ENCODE measurements at regions of chr19 and their contacts with region 1.

Region 1: GRCh38 chr19:506404-507285 is 652 bp upstream of the TPGS1 start:
- DNase-seq: peak; percentile 98 to 99 (median 99)
- H3K4me3 ChIP-seq: peak overlapping the region; percentile 61 to 97
- H3K4me3 Mint-ChIP-seq: peak overlapping the region; percentile 91 to 100 (median 99)
- H3K27ac ChIP-seq: peak overlapping the region; percentile 89
- H3K27ac Mint-ChIP-seq: peak overlapping the region; percentile 94 to 100 (median 100)
- H3K4me1 ChIP-seq: peaks cover 45% of the 10 kb centered on the region
- H3K4me1 Mint-ChIP-seq: peaks cover 13 to 55% (median 36%) of the 10 kb centered on the region in 4 donors
- H3K27me3 ChIP-seq: no peaks in the 10 kb centered on the region
- H3K27me3 Mint-ChIP-seq: no peaks in the 10 kb centered on the region

Region 2: GRCh38 chr19:344625-345319 is 161.9 kb before region 1 on chr19 and contains the start of gene MIER2:
- CTCF ChIA-PET with region 1: no interaction called
- POLR2A ChIA-PET with region 1: interaction called, 3 read pairs
- intact Hi-C with region 1: loop called (anchors 1 kb)
- DNase-seq: peak; percentile 81 to 96 (median 89)
- H3K4me3 ChIP-seq: peak within 1 kb of the TSS; percentile 38 to 71
- H3K4me3 Mint-ChIP-seq: peak within 1 kb of the TSS; percentile 82 to 91 (median 87)
- H3K27ac ChIP-seq: peak within 1 kb of the TSS; percentile 44
- H3K27ac Mint-ChIP-seq: peak within 1 kb of the TSS; percentile 77 to 93 (median 86)
- H3K4me1 ChIP-seq: peaks cover 43% of the 10 kb centered on the region
- H3K4me1 Mint-ChIP-seq: peaks cover 27 to 52% (median 42%) of the 10 kb centered on the region in 4 donors
- H3K27me3 ChIP-seq: no peaks in the 10 kb centered on the region
- H3K27me3 Mint-ChIP-seq: no peaks in the 10 kb centered on the region
- total RNA-seq, gene MIER2: 17.5 to 18.2 TPM

Region 3: DNA sequence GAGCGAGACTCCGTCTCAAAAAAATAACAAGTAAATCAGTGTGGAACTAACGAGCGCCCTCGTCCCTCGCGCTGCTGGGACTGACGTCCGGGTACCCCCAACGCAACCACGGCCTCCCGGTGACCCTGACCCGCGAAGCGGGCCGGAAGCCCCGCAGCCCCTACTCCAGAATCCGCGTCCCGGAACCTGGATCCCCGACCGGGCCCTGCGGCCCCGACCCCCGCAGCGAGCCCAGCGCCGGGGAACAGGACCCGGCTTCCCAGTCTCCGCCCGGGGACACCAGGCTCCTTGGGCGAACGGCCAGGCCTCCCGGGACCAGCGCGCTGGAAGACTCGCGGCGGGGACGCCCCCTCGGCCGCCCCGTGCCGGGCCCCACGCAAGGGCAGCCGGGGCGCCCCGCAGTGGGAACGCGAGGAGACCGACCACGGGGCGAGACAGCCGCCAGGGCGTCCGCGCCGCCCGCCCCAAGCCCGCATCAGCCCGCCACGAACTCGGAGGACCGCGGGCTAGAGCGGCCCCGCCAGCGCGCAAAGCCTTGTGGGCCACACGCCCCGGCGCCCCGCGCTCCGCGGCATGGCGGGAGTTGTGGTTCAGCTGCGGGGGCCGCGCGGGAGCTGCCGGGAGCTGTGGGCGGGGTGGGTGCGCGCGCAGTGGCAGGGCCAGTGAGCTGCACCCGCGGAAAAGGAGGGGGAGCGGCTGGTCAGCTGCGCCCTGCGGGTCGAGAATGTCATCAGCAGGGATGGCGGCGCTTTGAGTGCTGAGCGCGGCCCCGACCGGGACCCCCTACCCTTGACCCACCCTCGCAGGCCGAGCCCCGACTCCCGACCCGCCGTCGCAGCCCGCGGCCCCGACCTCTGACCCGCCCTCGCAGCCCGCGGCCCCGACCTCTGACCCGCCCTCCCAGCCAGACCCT is 17.9 kb before region 1 on chr19:
- CTCF ChIA-PET with region 1: interaction called, 30 read pairs
- POLR2A ChIA-PET with region 1: interaction called, 61 read pairs
- intact Hi-C with region 1: loop called (anchors 1 kb)
- DNase-seq: peak; percentile 89 to 92 (median 91)
- H3K4me3 ChIP-seq: peak overlapping the region in 1 of 2 donors; percentile 77
- H3K4me3 Mint-ChIP-seq: peak overlapping the region; percentile 68 to 91 (median 82)
- H3K27ac ChIP-seq: peak overlapping the region; percentile 79
- H3K27ac Mint-ChIP-seq: peak overlapping the region; percentile 24 to 91 (median 80)
- H3K4me1 ChIP-seq: peaks cover 5% of the 10 kb centered on the region
- H3K4me1 Mint-ChIP-seq: peaks cover 0 to 24% (median 2%) of the 10 kb centered on the region in 4 donors
- H3K27me3 ChIP-seq: no peaks in the 10 kb centered on the region
- H3K27me3 Mint-ChIP-seq: peaks cover 4 to 6% of the 10 kb centered on the region in 2 donors

Region 4: GRCh38 chr19:531009-531752 is 24.5 kb after region 1 on chr19:
- CTCF ChIA-PET with region 1: interaction called, 48 read pairs
- POLR2A ChIA-PET with region 1: interaction called, 111 read pairs
- intact Hi-C with region 1: loop called (anchors 1 kb)
- DNase-seq: peak; percentile 79 to 98 (median 92)
- H3K4me3 ChIP-seq: peak overlapping the region in 1 of 2 donors; percentile 61
- H3K4me3 Mint-ChIP-seq: peak overlapping the region; percentile 79 to 87 (median 84)
- H3K27ac ChIP-seq: peak overlapping the region; percentile 81
- H3K27ac Mint-ChIP-seq: peak overlapping the region; percentile 58 to 93 (median 88)
- H3K4me1 ChIP-seq: peaks cover 27% of the 10 kb centered on the region
- H3K4me1 Mint-ChIP-seq: peaks cover 6 to 24% (median 10%) of the 10 kb centered on the region in 4 donors
- H3K27me3 ChIP-seq: no peaks in the 10 kb centered on the region
- H3K27me3 Mint-ChIP-seq: peaks cover 0 to 3% of the 10 kb centered on the region in 2 donors

Region 5: GRCh38 chr19:572140-572742 is 65.6 kb after region 1 on chr19 and contains the start of gene BSG:
- CTCF ChIA-PET with region 1: interaction called, 7 read pairs
- POLR2A ChIA-PET with region 1: interaction called, 25 read pairs
- intact Hi-C with region 1: no loop called
- DNase-seq: peak; percentile 98 to 99 (median 99)
- H3K4me3 ChIP-seq: peak within 1 kb of the TSS; percentile 75 to 81
- H3K4me3 Mint-ChIP-seq: peak within 1 kb of the TSS; percentile 95 to 99 (median 98)
- H3K27ac ChIP-seq: peak within 1 kb of the TSS; percentile 70
- H3K27ac Mint-ChIP-seq: peak within 1 kb of the TSS; percentile 96 to 100 (median 98)
- H3K4me1 ChIP-seq: peaks cover 46% of the 10 kb centered on the region
- H3K4me1 Mint-ChIP-seq: peaks cover 18 to 49% (median 35%) of the 10 kb centered on the region in 4 donors
- H3K27me3 ChIP-seq: no peaks in the 10 kb centered on the region
- H3K27me3 Mint-ChIP-seq: no peaks in the 10 kb centered on the region
- total RNA-seq, gene BSG: 150 to 151 TPM

Region 6: DNA sequence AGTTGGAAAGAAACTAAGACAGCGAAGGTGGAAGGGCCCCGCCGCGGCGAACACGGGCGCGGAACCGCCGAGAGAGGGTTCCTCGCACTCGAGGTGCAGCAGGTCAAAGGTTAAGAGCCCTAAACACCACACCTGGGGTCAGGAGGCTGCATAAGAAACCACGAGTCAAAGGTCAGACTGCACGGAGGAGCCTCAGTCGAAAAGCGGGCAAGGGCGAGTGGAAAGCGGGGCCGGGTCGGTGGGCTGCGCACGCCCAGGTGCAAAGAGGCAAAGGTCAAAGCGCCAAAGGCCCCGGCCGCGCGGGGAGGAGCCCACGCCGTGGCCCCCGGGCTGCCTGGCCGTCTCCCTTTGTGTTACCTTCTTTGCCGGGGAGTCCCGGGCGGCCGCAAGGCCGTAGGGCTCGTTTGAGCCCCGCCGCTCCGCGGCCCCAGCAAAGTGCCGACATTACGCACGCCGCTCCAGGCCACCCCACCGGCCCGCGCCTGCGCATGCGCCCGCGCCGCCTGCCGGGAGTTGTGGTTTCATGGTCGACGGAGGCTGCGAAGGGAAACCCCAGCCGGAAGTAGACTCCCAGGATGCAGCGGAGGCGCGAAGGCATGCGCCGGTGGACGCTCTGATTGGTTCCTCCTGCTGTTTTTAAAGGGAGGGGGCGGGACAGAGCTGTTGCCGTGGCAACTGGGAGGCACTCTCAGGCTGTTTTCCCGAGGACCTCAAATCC is 126.6 kb after region 1 on chr19 and contains the start of gene POLRMT:
- CTCF ChIA-PET with region 1: no interaction called
- POLR2A ChIA-PET with region 1: interaction called, 3 read pairs
- intact Hi-C with region 1: loop called (anchors 10 kb)
- DNase-seq: peak; percentile 94 to 96 (median 96)
- H3K4me3 ChIP-seq: peak within 1 kb of the TSS; percentile 61 to 86
- H3K4me3 Mint-ChIP-seq: peak within 1 kb of the TSS; percentile 90 to 98 (median 96)
- H3K27ac ChIP-seq: peak within 1 kb of the TSS; percentile 71
- H3K27ac Mint-ChIP-seq: peak within 1 kb of the TSS; percentile 94 to 98 (median 97)
- H3K4me1 ChIP-seq: peaks cover 22% of the 10 kb centered on the region
- H3K4me1 Mint-ChIP-seq: peaks cover 2 to 49% (median 24%) of the 10 kb centered on the region in 4 donors
- H3K27me3 ChIP-seq: no peaks in the 10 kb centered on the region
- H3K27me3 Mint-ChIP-seq: no peaks in the 10 kb centered on the region
- total RNA-seq, gene POLRMT: 98.9 to 103 TPM

Region 7: GRCh38 chr19:821825-822503 is 315.3 kb after region 1 on chr19 and contains the start of gene PLPPR3:
- CTCF ChIA-PET with region 1: no interaction called
- POLR2A ChIA-PET with region 1: no interaction called
- intact Hi-C with region 1: no loop called
- DNase-seq: no peak
- H3K4me3 ChIP-seq: no peak within 1 kb of the TSS
- H3K4me3 Mint-ChIP-seq: peak within 1 kb of the TSS in 1 of 8 donors; percentile 6
- H3K27ac ChIP-seq: no peak within 1 kb of the TSS
- H3K27ac Mint-ChIP-seq: peak within 1 kb of the TSS in 1 of 7 donors; percentile 57
- H3K4me1 ChIP-seq: no peaks in the 10 kb centered on the region
- H3K4me1 Mint-ChIP-seq: no peaks in the 10 kb centered on the region
- H3K27me3 ChIP-seq: no peaks in the 10 kb centered on the region
- H3K27me3 Mint-ChIP-seq: peaks cover 4 to 7% of the 10 kb centered on the region in 2 donors
- total RNA-seq, gene PLPPR3: not detected

Region 8: DNA sequence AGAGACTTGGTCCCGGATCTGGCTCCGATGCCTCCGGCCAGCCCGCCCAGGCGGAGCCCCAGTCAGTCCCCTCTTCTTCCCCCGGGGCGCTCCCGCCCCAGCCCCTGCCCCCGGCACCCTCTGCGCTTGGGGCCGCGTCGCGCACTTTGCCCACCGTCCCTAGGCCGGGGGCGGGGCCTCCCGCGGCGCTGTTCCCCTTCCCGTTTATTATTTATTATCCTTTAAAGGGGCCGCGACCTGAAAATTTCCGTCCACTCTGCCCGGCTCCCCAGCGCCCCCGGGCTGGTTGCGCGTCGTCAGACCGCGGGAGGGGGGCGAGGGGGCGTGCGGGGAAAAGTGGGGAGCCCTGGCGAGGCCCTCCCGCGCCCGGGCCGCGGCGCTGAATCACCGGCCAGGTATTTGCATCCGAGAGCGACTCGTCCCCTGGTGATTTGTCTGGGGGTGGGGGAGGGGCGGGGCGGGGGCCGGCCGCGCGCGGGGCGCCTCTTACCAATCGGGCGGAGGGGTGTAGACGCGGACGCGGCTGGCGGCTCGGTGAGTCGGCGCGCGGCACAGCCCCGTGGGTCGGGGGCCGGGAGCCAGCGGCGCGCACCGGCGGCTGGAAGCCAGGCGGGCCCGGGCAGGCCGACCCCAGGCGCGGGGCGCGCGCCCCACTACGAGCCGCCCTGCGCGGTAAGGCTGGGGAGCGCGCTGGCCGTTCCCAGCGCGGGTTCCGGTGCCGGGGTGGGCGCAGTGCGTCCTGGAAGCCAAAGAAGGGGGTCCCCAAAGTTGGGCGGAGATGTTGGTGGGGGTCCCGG is 419.1 kb after region 1 on chr19 and contains the start of gene ARID3A:
- CTCF ChIA-PET with region 1: no interaction called
- POLR2A ChIA-PET with region 1: no interaction called
- intact Hi-C with region 1: no loop called
- DNase-seq: peak; percentile 73 to 85 (median 78)
- H3K4me3 ChIP-seq: peak within 1 kb of the TSS; percentile 47 to 91
- H3K4me3 Mint-ChIP-seq: peak within 1 kb of the TSS; percentile 80 to 88 (median 84)
- H3K27ac ChIP-seq: peak within 1 kb of the TSS; percentile 64
- H3K27ac Mint-ChIP-seq: peak within 1 kb of the TSS in 6 of 7 donors; percentile 37 to 88 (median 72)
- H3K4me1 ChIP-seq: peaks cover 22% of the 10 kb centered on the region
- H3K4me1 Mint-ChIP-seq: peaks cover 8 to 21% (median 13%) of the 10 kb centered on the region in 4 donors
- H3K27me3 ChIP-seq: no peaks in the 10 kb centered on the region
- H3K27me3 Mint-ChIP-seq: peaks cover 0 to under 1% of the 10 kb centered on the region in 2 donors
- total RNA-seq, gene ARID3A: 9.2 to 9.6 TPM

Measured in CD4-positive, alpha-beta memory T cell (primary cell).